Heart left ventricle (tissue), 16 donors: ENCODE measurements at regions of chr13 and their contacts with region 1.

Region 1: GRCh38 chr13:28718543-28719226 is at the start of gene SLC46A3:
- DNase-seq: peak; percentile 99 to 100 (median 100)
- ATAC-seq: peak; percentile 98 to 99 (median 98)
- H3K4me3 ChIP-seq: peak within 1 kb of the TSS; percentile 54 to 87 (median 77)
- H3K27ac ChIP-seq: peak within 1 kb of the TSS; percentile 87 to 100 (median 98)
- H3K4me1 ChIP-seq: peaks cover 0 to 36% (median 29%) of the 10 kb centered on the region in 12 donors
- H3K27me3 ChIP-seq: no peaks in the 10 kb centered on the region
- CTCF ChIP-seq: peak in 5 of 12 donors; percentile 6 to 34 (median 20)
- POLR2A ChIP-seq: peak; percentile 40 to 78
- total RNA-seq, gene SLC46A3: 11.5 to 18.1 (median 16.2) TPM

Region 2: DNA sequence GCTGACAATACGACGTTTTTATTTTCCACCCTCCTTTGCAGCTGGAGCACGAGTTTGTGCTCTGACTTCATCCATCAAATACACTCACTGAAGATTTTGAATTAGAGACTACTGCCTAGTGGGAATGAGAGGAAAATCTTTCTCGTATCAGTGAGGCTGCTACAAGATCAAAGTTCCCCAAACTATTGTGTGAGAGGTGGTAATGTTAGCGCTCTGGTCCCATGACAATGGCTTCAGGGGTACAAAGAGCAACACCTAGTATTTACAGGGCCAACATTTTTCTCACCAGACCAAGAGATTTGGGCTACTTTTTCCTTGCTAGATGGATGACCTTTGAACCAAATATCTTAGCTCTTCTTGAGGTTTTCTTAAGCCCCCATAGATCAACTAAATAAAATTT is 829.2 kb before region 1 on chr13:
- intact Hi-C with region 1: no loop called
- DNase-seq: no peak
- ATAC-seq: no peak
- H3K4me3 ChIP-seq: no peak overlapping the region
- H3K27ac ChIP-seq: no peak overlapping the region
- H3K4me1 ChIP-seq: no peaks in the 10 kb centered on the region
- H3K27me3 ChIP-seq: peaks cover 0 to 39% (median 4%) of the 10 kb centered on the region in 9 donors
- CTCF ChIP-seq: no peak
- POLR2A ChIP-seq: no peak

Region 3: GRCh38 chr13:28138012-28138755 is 580.5 kb before region 1 on chr13 and contains the start of gene PAN3:
- intact Hi-C with region 1: loop called in 1 of 10 experiments (anchors 5 kb)
- DNase-seq: peak; percentile 92 to 98 (median 94)
- ATAC-seq: peak; percentile 75 to 89 (median 88)
- H3K4me3 ChIP-seq: peak within 1 kb of the TSS; percentile 51 to 100 (median 92)
- H3K27ac ChIP-seq: peak within 1 kb of the TSS; percentile 73 to 99 (median 98)
- H3K4me1 ChIP-seq: peaks cover 0 to 48% (median 26%) of the 10 kb centered on the region in 12 donors
- H3K27me3 ChIP-seq: no peaks in the 10 kb centered on the region
- CTCF ChIP-seq: peak in 4 of 12 donors; percentile 15 to 44 (median 25)
- POLR2A ChIP-seq: peak in 1 of 2 donors; percentile 58
- total RNA-seq, gene PAN3: 7.4 to 18.8 (median 9.5) TPM

Region 4: DNA sequence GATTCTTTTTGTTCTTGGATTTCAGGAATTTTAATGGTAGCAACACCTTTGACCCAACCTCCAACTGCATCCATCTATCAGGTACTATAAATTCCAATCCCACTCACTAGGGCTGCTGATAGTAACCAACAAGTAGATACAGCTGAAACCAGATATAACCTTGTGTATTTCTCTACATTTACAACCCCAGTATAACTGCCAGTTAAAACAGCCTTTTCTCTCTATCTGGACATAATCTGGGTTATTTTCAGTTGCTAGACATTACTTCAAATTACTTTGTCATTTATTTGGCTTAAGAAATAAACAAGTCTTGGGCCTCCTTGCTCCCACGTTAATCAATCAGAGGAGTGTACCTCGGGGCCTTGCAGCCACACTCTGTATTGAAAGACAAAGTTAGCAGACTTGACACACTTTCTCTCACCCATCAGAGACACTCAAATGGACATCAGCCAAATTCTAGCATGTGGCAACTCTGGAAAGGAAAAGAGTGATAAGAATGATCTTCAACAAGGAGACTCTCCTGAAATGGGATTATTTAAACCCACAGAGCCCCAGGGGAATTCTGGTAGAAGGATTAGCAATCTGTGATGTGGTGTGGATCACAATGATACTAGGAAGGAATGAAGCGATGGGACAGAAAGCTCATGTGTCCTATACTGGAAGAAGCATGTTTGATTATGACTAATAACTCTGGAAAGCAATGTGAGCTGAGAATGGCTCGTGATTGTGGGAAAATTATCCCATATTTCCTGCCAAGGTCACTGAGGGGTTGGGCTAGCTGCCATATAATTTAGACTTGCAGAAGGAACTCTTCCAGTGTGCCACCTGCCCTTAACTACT is 381.3 kb before region 1 on chr13:
- intact Hi-C with region 1: loop called in 1 of 10 experiments (anchors 5 kb)
- DNase-seq: peak in 1 of 5 donors; percentile 29
- ATAC-seq: peak; percentile 21 to 61 (median 42)
- H3K4me3 ChIP-seq: no peak overlapping the region
- H3K27ac ChIP-seq: peak overlapping the region; percentile 12 to 69 (median 60)
- H3K4me1 ChIP-seq: peaks cover 10 to 65% (median 37%) of the 10 kb centered on the region in 12 donors
- H3K27me3 ChIP-seq: peaks cover 0 to 9% (median 0%) of the 10 kb centered on the region in 9 donors
- CTCF ChIP-seq: no peak
- POLR2A ChIP-seq: no peak

Region 5: DNA sequence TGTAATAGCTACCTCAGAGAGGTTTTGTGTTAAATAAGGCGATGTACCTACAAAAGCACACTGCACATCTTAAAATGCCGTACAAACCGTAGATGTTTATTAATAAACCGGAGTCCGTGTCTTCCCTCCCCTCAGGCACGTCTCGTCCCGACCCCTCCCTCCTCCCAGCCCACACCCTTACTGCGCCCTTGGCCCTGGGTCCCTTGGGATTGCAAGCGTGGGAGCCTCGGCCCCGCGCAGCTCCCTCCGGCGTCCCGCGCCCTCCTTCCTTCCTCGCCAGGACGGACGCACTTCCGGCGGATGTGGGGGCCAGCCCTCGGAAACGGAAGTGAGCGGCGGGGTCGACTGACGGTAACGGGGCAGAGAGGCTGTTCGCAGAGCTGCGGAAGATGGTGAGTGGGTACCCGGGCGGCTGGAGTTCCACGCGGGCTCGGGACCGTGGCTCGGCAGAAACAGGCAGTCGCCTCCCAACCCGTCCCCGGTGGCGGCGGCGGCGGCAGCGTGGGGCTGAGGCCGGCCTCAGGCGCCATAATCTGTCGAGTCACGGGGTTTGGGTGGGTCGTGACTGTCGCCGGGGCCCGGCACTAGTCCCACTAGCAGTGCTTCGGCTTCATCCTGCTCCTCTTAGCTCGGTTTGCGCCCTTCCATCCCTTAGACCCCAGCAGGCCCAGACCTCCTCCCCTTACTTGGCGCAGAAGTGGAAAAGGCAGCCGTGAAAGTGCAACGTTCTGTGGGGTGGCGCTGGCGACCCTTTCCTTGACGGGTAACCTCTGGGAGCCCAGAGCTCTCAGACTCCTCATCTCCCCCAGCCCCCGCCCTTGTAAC is 59.7 kb before region 1 on chr13 and contains the start of gene POMP:
- intact Hi-C with region 1: loop called in 4 of 10 experiments (anchors 2 to 10 kb)
- DNase-seq: peak; percentile 96 to 97 (median 96)
- ATAC-seq: peak; percentile 97 to 98 (median 98)
- H3K4me3 ChIP-seq: peak within 1 kb of the TSS; percentile 63 to 99 (median 88)
- H3K27ac ChIP-seq: peak within 1 kb of the TSS; percentile 88 to 99 (median 96)
- H3K4me1 ChIP-seq: peaks cover 10 to 71% (median 44%) of the 10 kb centered on the region in 12 donors
- H3K27me3 ChIP-seq: no peaks in the 10 kb centered on the region
- CTCF ChIP-seq: peak in 2 of 12 donors; percentile 3 to 9
- POLR2A ChIP-seq: peak; percentile 43 to 89
- total RNA-seq, gene POMP: 87.8 to 120 (median 102) TPM

Region 6: GRCh38 chr13:28666897-28667488 is 51.7 kb before region 1 on chr13:
- intact Hi-C with region 1: loop called in 2 of 10 experiments (anchors 5 to 10 kb)
- DNase-seq: no peak
- ATAC-seq: no peak
- H3K4me3 ChIP-seq: no peak overlapping the region
- H3K27ac ChIP-seq: no peak overlapping the region
- H3K4me1 ChIP-seq: peaks cover 0 to 31% (median 5%) of the 10 kb centered on the region in 12 donors
- H3K27me3 ChIP-seq: no peaks in the 10 kb centered on the region
- CTCF ChIP-seq: no peak
- POLR2A ChIP-seq: no peak

Region 7: DNA sequence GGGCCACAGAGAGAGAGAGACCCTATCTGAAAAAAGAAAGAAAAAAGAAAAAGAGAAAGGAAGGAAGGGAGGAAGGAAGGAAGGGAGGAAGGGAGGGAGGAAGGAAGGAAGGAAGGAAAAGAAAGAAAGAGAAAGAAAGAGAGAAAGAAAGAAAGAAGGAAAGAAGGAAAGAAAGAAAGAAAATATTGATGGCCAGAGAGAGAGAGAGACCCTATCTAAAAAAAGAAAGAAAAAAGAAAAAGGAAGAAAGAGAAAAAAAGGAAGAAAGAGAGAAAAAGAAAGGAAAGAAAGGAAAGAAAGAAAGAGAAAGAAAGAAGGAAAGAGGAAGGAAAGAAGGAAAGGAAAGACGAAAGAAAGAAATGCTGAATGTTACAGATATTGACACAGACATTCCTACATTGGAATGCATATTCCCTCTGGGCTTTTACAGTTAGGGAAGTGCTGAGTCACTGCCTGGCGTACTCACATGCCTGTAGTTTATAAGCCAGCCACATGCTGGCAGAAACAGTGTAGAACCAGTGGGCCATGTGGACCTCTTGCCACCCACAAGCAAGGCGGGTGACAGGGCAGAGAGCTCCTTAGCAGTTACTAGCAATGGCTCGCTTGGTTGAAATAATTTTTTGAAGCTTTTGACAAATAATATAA is 34.7 kb after region 1 on chr13:
- intact Hi-C with region 1: loop called in 5 of 10 experiments (anchors 2 to 5 kb)
- DNase-seq: peak; percentile 44 to 69 (median 61)
- ATAC-seq: peak; percentile 64 to 82 (median 74)
- H3K4me3 ChIP-seq: no peak overlapping the region
- H3K27ac ChIP-seq: peak overlapping the region in 11 of 12 donors; percentile 60 to 89 (median 80)
- H3K4me1 ChIP-seq: peaks cover 0 to 48% (median 18%) of the 10 kb centered on the region in 12 donors
- H3K27me3 ChIP-seq: no peaks in the 10 kb centered on the region
- CTCF ChIP-seq: peak in 2 of 12 donors; percentile 10 to 18
- POLR2A ChIP-seq: no peak